Right cardiac atrium (tissue), 5 donors: ENCODE measurements at regions of chr6 and their contacts with region 1.

Region 1: GRCh38 chr6:109095027-109095834 is at the start of gene CEP57L1:
- DNase-seq: peak; percentile 100
- ATAC-seq: peak; percentile 81 to 86
- H3K4me3 ChIP-seq: peak within 1 kb of the TSS; percentile 85
- H3K27ac ChIP-seq: peak within 1 kb of the TSS; percentile 94
- H3K4me1 ChIP-seq: peaks cover 3% of the 10 kb centered on the region
- H3K27me3 ChIP-seq: no peaks in the 10 kb centered on the region
- total RNA-seq, gene CEP57L1: 7.1 to 10.4 (median 9.1) TPM

Region 2: GRCh38 chr6:109382576-109383437 is 287.6 kb after region 1 on chr6:
- intact Hi-C with region 1: loop called in 2 of 4 experiments (anchors 10 kb)
- DNase-seq: peak; percentile 95 to 98 (median 97)
- ATAC-seq: peak; percentile 95
- H3K4me3 ChIP-seq: peak overlapping the region; percentile 81
- H3K27ac ChIP-seq: peak overlapping the region; percentile 80
- H3K4me1 ChIP-seq: no peaks in the 10 kb centered on the region
- H3K27me3 ChIP-seq: no peaks in the 10 kb centered on the region